Posterior cingulate gyrus (tissue), 11 donors: ENCODE measurements at regions of chr11 and their contacts with region 1.

Region 1: GRCh38 chr11:66677599-66678375 is at the start of gene RBM4B:
- DNase-seq: peak; percentile 95 to 99 (median 97)

Region 2: GRCh38 chr11:66408488-66409214 is 269.1 kb before region 1 on chr11:
- intact Hi-C with region 1: loop called (anchors 1 kb)
- DNase-seq: peak; percentile 80 to 98 (median 92)

Region 3: GRCh38 chr11:66438504-66439466 is 239.0 kb before region 1 on chr11 and contains the start of gene MRPL11:
- intact Hi-C with region 1: loop called (anchors 10 kb)
- DNase-seq: peak; percentile 75 to 98 (median 86)

Region 4: GRCh38 chr11:66579017-66579606 is 98.7 kb before region 1 on chr11:
- intact Hi-C with region 1: loop called (anchors 2 kb)
- DNase-seq: peak; percentile 62 to 96 (median 82)

Region 5: GRCh38 chr11:66616379-66617154 is 61.2 kb before region 1 on chr11 and contains the start of gene RBM14:
- intact Hi-C with region 1: loop called (anchors 1 kb)
- DNase-seq: peak; percentile 97 to 100 (median 98)

Region 6: DNA sequence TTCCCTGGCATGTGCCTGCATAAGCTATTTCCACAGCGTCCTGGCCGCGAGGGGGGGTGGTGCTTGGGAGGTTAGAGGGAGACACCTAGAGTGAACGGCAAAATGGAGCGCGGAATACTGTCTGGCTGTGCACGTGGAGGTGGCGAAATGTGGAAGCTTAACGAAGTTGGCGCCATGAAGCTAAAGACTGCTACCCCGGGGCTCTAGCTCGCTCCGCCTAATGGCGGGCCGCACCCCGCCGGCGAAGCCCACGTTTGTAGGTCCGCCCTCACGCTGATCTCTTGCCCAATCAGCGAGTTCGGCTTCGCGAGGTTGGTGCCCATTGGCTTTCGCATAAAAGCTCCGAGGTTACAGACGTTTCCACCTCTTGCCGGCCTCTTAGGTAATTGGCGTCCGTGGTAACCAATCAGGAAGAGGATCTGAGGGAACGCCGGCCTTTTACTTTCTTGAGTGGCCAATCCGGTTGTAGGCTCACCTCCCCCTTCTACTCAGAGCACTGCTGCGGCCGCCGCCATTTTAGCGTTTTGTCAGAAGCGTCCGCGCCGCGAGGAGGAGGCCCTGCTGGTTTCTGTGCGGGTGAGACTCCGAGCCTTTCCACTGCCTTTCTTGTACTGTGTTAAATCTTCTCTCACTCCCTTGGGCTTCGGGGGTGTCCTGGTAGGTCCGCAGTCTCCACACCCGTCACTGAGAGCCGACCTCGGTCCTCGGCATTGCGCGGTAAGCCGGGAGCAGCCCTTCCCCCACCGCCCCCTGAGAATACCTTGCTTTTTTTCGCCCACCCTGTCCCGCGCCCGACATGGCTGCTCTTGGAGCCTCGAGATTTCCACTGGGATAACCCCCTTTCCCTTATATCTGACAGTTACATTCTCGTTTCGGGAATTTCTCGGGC is 39.4 kb before region 1 on chr11 and contains the start of gene RBM4:
- intact Hi-C with region 1: loop called (anchors 1 kb)
- DNase-seq: peak; percentile 97 to 100 (median 99)